GM13977 (cell line): ENCODE measurements at regions of chr1 and their contacts with region 1.

Region 1: GRCh38 chr1:219812491-219813203 is 115.7 kb downstream of the SLC30A10 start:
- DNase-seq: peak; percentile 60
- CTCF ChIP-seq: peak; percentile 82

Region 2: GRCh38 chr1:218345673-218346390 is 1466.8 kb before region 1 on chr1:
- in situ Hi-C with region 1: loop called (anchors 25 kb)
- DNase-seq: peak; percentile 50
- CTCF ChIP-seq: no peak

Region 3: GRCh38 chr1:219220945-219221344 is 591.7 kb before region 1 on chr1:
- in situ Hi-C with region 1: loop called (anchors 25 kb)
- DNase-seq: peak; percentile 23
- CTCF ChIP-seq: peak; percentile 41

Region 4: DNA sequence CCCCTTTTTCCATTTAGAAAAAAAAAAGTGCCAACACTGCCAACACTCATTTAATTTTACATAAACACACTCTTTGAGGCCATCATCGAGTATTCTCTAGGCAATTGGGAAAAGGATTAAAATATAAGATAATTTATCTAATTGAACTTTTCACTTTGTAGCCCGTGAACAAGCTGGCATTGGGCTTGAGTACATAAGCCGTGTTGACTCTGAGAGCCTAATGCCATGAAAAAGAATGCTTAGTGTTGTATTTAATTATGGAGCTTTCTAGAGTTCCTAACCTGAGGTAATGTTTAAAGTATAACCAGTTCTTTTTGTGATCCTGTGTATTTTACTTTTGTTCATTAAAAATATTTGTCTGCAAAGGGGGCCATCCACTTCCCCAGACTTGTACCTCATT is 445.2 kb before region 1 on chr1:
- in situ Hi-C with region 1: no loop called
- DNase-seq: no peak
- CTCF ChIP-seq: no peak

Region 5: GRCh38 chr1:219385786-219386427 is 426.7 kb before region 1 on chr1:
- in situ Hi-C with region 1: loop called (anchors 25 kb)
- DNase-seq: peak; percentile 42
- CTCF ChIP-seq: peak; percentile 77

Region 6: GRCh38 chr1:219405531-219406331 is 406.9 kb before region 1 on chr1:
- in situ Hi-C with region 1: no loop called
- DNase-seq: no peak
- CTCF ChIP-seq: no peak